MCF 10A (cell line): ENCODE measurements at regions of chr17 and their contacts with region 1.

Region 1: GRCh38 chr17:17496189-17497064 is at the start of gene RASD1:
- DNase-seq: peak; percentile 69
- H3K4me3 Mint-ChIP-seq: peak within 1 kb of the TSS; percentile 57
- H3K27ac Mint-ChIP-seq: no peak within 1 kb of the TSS
- H3K4me1 Mint-ChIP-seq: no peaks in the 10 kb centered on the region
- H3K27me3 Mint-ChIP-seq: no peaks in the 10 kb centered on the region
- CTCF ChIP-seq: peak; percentile 88
- total RNA-seq, gene RASD1: 0.21 TPM in 1 of 2 replicates, not detected in the other

Region 2: DNA sequence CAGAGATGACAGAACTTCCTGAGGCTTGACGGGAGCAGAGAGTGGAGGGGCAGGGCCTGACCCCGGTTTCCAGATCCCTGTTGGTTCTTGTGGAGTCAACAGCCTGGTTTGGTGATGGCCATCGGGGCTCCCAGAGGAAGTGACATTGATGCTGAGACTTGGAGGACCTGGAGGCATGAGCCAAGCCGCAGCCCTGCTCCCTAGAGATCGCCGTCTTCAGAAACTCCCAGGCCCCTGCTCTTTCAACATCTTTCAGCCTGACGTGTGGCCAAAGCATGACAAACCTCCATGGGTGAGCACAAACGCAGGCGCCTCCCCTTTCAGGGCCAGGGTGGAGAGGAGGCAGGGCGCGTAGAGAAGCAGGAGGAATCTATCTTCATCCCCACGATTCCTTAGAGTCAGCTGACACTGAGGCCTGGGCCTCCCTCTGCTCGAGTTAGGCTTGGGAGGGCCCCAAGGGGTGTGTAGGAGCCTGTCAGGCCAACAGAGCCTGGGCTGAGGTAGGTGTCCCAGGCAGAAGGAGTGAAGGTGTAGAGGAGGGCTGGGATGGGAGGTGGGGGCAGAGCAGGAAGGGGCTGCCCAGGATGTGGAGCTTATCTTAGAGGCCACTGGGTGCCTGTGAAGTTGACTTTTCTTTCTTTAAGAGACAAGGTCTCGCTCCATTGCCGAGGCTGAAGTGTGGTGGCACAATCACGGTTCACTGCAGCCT is 75.7 kb before region 1 on chr17:
- CTCF ChIA-PET with region 1: no interaction called
- POLR2A ChIA-PET with region 1: no interaction called
- intact Hi-C with region 1: no loop called
- DNase-seq: peak; percentile 43
- H3K4me3 Mint-ChIP-seq: no peak overlapping the region
- H3K27ac Mint-ChIP-seq: no peak overlapping the region
- H3K4me1 Mint-ChIP-seq: peaks cover 10% of the 10 kb centered on the region
- H3K27me3 Mint-ChIP-seq: no peaks in the 10 kb centered on the region
- CTCF ChIP-seq: no peak

Region 3: DNA sequence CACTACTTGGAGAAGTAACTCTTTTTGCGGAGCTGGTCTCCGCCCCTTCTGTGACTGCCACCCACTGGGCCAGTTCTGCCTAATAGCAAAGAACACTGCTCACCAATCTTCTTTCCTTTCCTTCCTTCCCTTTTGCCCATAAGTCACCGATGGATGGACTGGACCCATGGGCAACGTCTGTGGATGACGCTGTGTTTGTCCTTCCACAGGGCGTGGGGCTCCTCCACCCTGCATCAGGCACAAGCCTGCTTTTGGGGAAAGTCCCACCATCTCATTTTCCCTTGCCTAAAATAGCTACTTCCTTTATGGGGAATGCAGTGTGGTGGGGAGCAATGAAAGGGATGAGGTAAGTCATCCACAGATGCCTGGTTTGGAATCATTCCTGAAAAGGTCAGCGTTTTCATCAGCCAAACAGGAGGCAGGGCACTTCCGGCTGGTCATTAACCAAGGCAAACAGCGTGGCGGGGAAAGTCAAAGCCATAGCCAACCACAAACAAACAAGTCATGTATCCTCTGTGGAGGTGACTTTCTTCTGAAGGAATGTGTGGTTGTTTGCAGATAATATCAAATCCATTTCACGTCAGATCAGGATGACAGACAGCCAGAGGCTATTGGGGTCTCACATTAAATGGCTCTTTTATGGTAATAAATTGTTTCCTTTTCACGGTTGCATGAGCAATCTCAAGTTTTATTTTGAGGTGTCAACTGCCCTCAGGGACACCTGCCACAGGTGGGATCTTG is 50.3 kb before region 1 on chr17:
- CTCF ChIA-PET with region 1: no interaction called
- POLR2A ChIA-PET with region 1: no interaction called
- intact Hi-C with region 1: no loop called
- DNase-seq: peak; percentile 67
- H3K4me3 Mint-ChIP-seq: no peak overlapping the region
- H3K27ac Mint-ChIP-seq: no peak overlapping the region
- H3K4me1 Mint-ChIP-seq: peaks cover 8% of the 10 kb centered on the region
- H3K27me3 Mint-ChIP-seq: peaks cover 11% of the 10 kb centered on the region
- CTCF ChIP-seq: no peak

Region 4: GRCh38 chr17:17511881-17512858 is 15.7 kb after region 1 on chr17:
- CTCF ChIA-PET with region 1: interaction called, 20 read pairs
- POLR2A ChIA-PET with region 1: interaction called, 6 read pairs
- intact Hi-C with region 1: no loop called
- DNase-seq: peak; percentile 90
- H3K4me3 Mint-ChIP-seq: no peak overlapping the region
- H3K27ac Mint-ChIP-seq: peak overlapping the region; percentile 41
- H3K4me1 Mint-ChIP-seq: peaks cover 15% of the 10 kb centered on the region
- H3K27me3 Mint-ChIP-seq: no peaks in the 10 kb centered on the region
- CTCF ChIP-seq: no peak

Region 5: DNA sequence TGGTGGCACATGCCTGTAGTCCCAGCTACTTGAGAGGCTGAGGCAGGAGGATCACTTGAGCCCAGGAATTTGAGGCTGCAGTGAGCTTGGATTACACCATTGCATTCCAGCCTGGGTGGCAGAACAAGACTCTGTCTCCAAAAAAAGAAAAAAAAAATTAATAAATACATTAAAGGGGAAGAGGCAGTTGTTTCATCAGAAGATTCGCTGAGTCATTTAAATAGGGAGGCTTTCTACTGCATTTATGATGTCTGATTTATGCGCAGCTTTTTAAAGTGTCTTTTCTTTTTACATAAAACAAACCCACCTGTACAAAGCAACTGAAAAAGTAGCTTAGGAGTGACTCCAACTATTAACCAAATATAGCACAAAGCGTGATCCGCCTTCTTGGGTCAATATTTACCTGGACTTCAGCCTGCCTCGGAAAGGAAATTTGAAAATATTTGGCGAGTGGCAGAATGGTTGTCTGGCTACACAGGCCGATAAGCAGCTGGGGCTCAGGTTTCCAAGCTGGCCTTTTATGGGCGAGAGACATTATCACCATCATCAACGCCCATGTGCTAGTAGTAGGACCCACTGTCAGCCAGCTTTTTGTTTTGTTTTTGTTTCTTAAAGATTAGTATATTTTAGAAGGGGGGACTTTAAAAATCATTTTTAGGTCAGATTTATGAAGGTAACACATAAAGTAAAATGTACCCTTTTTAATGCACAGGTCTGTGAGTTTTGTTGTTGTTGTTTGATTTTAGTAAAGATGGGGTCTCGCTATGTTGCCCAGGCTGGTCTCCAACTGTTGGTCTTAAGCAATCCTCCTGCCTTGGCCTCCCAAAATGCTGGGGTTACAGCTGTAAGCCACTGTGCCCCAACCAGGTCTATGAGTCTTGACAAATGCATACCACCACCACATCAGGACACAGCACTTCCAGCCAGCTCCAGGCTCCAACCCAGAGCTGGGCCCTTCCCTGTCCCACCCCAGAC is 42.3 kb after region 1 on chr17:
- CTCF ChIA-PET with region 1: no interaction called
- POLR2A ChIA-PET with region 1: no interaction called
- intact Hi-C with region 1: no loop called
- DNase-seq: no peak
- H3K4me3 Mint-ChIP-seq: no peak overlapping the region
- H3K27ac Mint-ChIP-seq: no peak overlapping the region
- H3K4me1 Mint-ChIP-seq: no peaks in the 10 kb centered on the region
- H3K27me3 Mint-ChIP-seq: no peaks in the 10 kb centered on the region
- CTCF ChIP-seq: no peak

Region 6: GRCh38 chr17:17568749-17569195 is 72.3 kb after region 1 on chr17:
- CTCF ChIA-PET with region 1: interaction called, 24 read pairs
- POLR2A ChIA-PET with region 1: no interaction called
- intact Hi-C with region 1: loop called (anchors 1 kb)
- DNase-seq: peak; percentile 64
- H3K4me3 Mint-ChIP-seq: no peak overlapping the region
- H3K27ac Mint-ChIP-seq: no peak overlapping the region
- H3K4me1 Mint-ChIP-seq: no peaks in the 10 kb centered on the region
- H3K27me3 Mint-ChIP-seq: no peaks in the 10 kb centered on the region
- CTCF ChIP-seq: peak; percentile 74

Region 7: DNA sequence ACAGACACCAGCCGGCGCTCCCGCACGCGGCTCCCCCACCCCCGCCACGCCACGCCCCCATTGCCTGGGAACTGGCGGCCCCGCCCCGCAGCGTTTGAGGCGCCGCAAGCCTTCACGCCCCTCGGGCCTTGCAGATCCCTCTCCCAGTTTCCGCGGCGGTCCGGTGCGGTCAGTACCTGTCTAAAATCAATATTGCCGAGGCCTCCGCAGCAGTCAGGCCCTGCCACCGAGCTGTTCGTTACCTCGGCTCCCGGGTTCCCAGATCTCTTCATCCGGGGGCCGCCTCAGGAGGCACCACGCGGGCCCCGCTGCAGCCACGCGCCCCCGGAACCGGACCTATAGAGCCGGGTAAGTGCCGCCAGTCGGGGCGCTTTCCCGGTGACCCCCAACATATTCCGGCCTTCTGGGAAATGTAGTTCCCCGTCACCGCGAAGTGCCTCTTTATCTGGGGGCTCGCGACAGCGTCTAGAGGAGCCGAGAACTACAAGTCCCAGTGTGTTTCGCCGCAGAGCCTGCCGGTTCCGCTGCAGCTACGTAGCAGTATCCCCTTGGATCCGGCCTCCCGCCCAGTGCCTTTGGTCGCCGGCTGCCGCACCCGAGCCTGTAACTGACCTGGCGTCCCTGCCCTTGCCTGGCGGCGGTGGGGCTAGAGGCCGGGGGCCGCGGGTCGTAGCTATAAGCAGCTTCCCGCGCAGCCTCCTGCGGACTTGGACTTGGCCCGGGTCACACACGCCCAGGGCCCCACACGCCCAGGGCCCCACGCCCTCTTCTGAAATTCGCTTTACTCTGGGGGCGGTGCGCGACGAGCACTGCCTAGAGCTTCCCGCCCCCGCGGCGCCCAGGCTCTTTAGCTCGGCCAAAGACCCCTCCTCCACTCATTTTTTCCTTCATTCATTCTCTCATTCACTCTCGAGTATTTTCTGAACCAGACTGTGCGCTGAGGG is 95.2 kb after region 1 on chr17 and contains the start of gene PEMT:
- CTCF ChIA-PET with region 1: interaction called, 15 read pairs
- POLR2A ChIA-PET with region 1: interaction called, 3 read pairs
- intact Hi-C with region 1: no loop called
- DNase-seq: peak; percentile 98
- H3K4me3 Mint-ChIP-seq: peak within 1 kb of the TSS; percentile 82
- H3K27ac Mint-ChIP-seq: peak within 1 kb of the TSS; percentile 80
- H3K4me1 Mint-ChIP-seq: peaks cover 19% of the 10 kb centered on the region
- H3K27me3 Mint-ChIP-seq: no peaks in the 10 kb centered on the region
- CTCF ChIP-seq: no peak
- total RNA-seq, gene PEMT: 37.0 and 49.8 TPM in 2 replicates

Region 8: GRCh38 chr17:17613708-17614114 is 117.3 kb after region 1 on chr17:
- CTCF ChIA-PET with region 1: interaction called, 19 read pairs
- POLR2A ChIA-PET with region 1: interaction called, 4 read pairs
- intact Hi-C with region 1: loop called (anchors 2 kb)
- DNase-seq: peak; percentile 69
- H3K4me3 Mint-ChIP-seq: no peak overlapping the region
- H3K27ac Mint-ChIP-seq: no peak overlapping the region
- H3K4me1 Mint-ChIP-seq: no peaks in the 10 kb centered on the region
- H3K27me3 Mint-ChIP-seq: no peaks in the 10 kb centered on the region
- CTCF ChIP-seq: peak; percentile 44

Region 9: DNA sequence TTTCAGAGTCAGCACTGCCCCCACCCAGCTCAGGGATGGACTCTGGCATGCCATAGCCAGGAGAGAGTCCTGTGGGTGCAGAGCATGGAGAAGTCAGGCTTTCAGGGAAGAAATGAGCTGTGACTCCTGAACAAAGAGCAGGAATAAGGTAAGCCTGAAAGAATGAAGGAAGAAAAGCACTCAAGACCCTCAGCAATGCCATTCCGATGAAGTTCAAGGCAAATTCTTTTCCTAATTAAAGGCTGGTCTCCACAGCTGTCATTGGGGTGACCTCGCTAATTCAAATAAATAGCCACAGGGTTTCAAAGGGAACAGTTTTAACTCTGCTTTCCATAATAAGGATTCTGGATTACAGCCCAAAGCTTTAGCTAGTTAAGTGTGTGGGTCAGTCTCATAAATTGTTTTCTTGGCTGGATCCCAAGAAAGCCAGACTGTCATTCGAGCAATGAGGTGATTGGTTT is 444.1 kb after region 1 on chr17:
- CTCF ChIA-PET with region 1: no interaction called
- POLR2A ChIA-PET with region 1: no interaction called
- intact Hi-C with region 1: no loop called
- DNase-seq: no peak
- H3K4me3 Mint-ChIP-seq: no peak overlapping the region
- H3K27ac Mint-ChIP-seq: no peak overlapping the region
- H3K4me1 Mint-ChIP-seq: peaks cover 57% of the 10 kb centered on the region
- H3K27me3 Mint-ChIP-seq: no peaks in the 10 kb centered on the region
- CTCF ChIP-seq: no peak